ENCODE measurements at regions of chr2 and their contacts with region 1.

Region 1: DNA sequence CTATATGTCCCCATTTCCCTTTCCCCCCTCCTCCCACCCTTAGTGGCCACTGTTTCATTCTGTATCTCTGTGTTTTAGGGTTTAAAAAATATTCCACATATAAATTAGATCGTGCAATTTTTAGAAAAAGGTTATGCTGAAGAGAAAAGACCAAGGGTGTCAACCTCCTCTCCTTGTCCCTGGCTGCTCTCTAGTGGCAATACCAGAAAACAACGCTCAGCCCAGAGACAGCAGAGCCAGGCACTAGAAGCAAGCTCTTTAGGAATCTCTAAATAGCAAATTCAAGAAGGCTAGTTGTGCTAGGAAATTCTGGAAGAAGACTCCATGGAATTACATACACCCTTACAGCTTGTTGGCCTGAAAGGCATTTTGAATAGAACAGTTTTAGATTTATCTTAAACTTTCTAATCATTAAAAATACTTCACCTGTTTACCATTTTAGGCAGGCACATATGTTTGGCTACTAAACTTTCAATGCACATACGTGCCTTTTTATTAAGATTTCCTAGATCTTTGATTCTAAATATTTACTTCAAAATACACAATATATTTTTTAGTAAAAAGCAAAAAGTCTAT is 35.1 kb upstream of the RASGRP3 start:
- DNase-seq: peak; percentile 79
- H3K4me3 ChIP-seq: no peak overlapping the region
- H3K27ac ChIP-seq: no peak overlapping the region
- H3K4me1 ChIP-seq: peaks cover 19% of the 10 kb centered on the region
- H3K27me3 ChIP-seq: no peaks in the 10 kb centered on the region
- CTCF ChIP-seq: peak; percentile 74
- POLR2A ChIP-seq: no peak

Region 2: GRCh38 chr2:32553829-32554432 is 887.4 kb before region 1 on chr2:
- CTCF ChIA-PET with region 1: interaction called, 3 read pairs
- POLR2A ChIA-PET with region 1: no interaction called
- dilution Hi-C with region 1: no loop called
- intact Hi-C with region 1: loop called (anchors 10 kb)
- DNase-seq: peak; percentile 63
- H3K4me3 ChIP-seq: no peak overlapping the region
- H3K27ac ChIP-seq: no peak overlapping the region
- H3K4me1 ChIP-seq: peaks cover 7% of the 10 kb centered on the region
- H3K27me3 ChIP-seq: no peaks in the 10 kb centered on the region
- CTCF ChIP-seq: peak; percentile 50
- POLR2A ChIP-seq: no peak

Region 3: GRCh38 chr2:33033606-33034081 is 407.7 kb before region 1 on chr2:
- CTCF ChIA-PET with region 1: interaction called, 20 read pairs
- POLR2A ChIA-PET with region 1: no interaction called
- dilution Hi-C with region 1: no loop called
- intact Hi-C with region 1: no loop called
- DNase-seq: peak; percentile 67
- H3K4me3 ChIP-seq: no peak overlapping the region
- H3K27ac ChIP-seq: no peak overlapping the region
- H3K4me1 ChIP-seq: peaks cover 15% of the 10 kb centered on the region
- H3K27me3 ChIP-seq: no peaks in the 10 kb centered on the region
- CTCF ChIP-seq: peak; percentile 13 to 46
- POLR2A ChIP-seq: no peak

Region 4: DNA sequence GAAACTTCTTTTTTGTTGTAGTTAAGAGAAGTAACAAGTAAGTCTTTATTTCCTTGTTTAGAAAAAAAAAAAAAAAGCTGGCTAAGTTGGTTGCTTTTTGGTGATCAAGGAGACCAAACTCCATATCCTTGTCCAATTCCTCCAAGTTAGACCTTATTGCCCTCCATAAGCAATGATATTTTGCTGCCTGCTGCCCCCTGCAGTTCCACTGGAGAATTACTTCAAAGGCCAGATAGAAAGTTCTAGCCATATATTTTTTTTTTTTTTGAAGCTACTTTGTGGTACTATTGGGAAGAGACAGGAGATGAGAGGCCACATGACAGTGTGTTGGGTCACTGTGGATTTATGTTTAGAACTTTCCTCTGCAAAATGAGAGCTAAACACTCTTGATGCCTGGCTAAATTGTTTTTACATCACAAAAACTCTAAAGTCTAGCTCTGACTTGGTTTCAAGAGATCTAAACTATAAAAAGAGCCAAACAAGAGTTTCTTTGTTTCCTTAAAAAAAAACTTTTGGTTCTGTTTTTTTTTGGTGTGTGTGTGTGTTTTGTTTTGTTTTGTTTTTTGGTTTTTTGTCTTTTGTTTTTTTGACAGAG is 45.6 kb before region 1 on chr2:
- CTCF ChIA-PET with region 1: interaction called, 15 read pairs
- POLR2A ChIA-PET with region 1: no interaction called
- dilution Hi-C with region 1: no loop called
- intact Hi-C with region 1: no loop called
- DNase-seq: peak; percentile 76
- H3K4me3 ChIP-seq: no peak overlapping the region
- H3K27ac ChIP-seq: no peak overlapping the region
- H3K4me1 ChIP-seq: no peaks in the 10 kb centered on the region
- H3K27me3 ChIP-seq: no peaks in the 10 kb centered on the region
- CTCF ChIP-seq: peak; percentile 56 to 58
- POLR2A ChIP-seq: no peak

Region 5: GRCh38 chr2:33419581-33420200 is 21.6 kb before region 1 on chr2:
- CTCF ChIA-PET with region 1: interaction called, 154 read pairs
- POLR2A ChIA-PET with region 1: interaction called, 4 read pairs
- dilution Hi-C with region 1: no loop called
- intact Hi-C with region 1: loop called (anchors 1 kb)
- DNase-seq: no peak
- H3K4me3 ChIP-seq: no peak overlapping the region
- H3K27ac ChIP-seq: peak overlapping the region; percentile 23
- H3K4me1 ChIP-seq: peaks cover 31% of the 10 kb centered on the region
- H3K27me3 ChIP-seq: no peaks in the 10 kb centered on the region
- CTCF ChIP-seq: no peak
- POLR2A ChIP-seq: no peak

Region 6: GRCh38 chr2:33583194-33583938 is 142.0 kb after region 1 on chr2:
- CTCF ChIA-PET with region 1: interaction called, 56 read pairs
- POLR2A ChIA-PET with region 1: no interaction called
- dilution Hi-C with region 1: no loop called
- intact Hi-C with region 1: loop called (anchors 1 kb)
- DNase-seq: peak; percentile 64
- H3K4me3 ChIP-seq: no peak overlapping the region
- H3K27ac ChIP-seq: no peak overlapping the region
- H3K4me1 ChIP-seq: peaks cover 3% of the 10 kb centered on the region
- H3K27me3 ChIP-seq: no peaks in the 10 kb centered on the region
- CTCF ChIP-seq: peak; percentile 63 to 66
- POLR2A ChIP-seq: no peak

Region 7: DNA sequence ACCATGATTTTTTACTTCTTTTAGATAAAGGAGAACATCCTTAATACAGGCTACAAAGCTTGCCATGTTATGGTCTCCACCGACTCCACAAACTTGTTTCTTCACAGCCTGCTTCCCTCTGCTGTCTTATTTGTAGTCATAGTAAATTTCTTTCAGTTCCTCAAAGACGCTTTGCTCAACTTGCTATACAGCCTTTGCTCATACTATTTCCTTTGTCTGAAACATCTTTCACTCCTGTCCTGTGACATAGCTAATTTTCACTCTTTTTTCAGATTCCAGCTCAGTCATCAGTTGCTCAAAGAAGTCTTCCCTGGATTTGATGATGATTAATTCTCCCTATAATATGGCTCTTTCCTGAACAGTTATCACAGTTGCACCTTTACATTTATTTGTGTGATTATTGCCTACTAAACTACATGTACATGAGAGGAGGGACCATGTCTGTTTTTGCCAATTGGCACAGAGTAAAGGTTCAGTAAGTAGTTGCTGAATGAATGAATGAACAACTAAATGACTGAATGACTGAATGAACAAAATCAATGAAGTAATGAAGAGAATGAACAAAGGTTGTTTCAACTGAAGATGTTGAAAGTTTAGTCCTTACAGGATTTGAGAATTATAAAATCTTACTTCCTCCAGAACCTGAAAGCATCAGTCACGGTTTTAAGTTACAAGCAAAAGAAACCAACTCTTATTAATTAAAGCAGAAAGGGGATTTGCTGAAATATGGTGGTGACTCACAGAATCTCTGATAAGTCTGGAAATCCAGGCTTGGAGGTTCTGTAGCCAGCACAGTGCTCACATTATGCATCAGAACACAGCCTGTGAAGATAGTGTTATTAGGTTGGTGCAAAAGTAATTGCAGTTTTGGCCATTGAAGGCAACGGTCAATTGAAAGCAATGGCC is 344.1 kb after region 1 on chr2:
- CTCF ChIA-PET with region 1: no interaction called
- POLR2A ChIA-PET with region 1: no interaction called
- dilution Hi-C with region 1: no loop called
- intact Hi-C with region 1: no loop called
- DNase-seq: no peak
- H3K4me3 ChIP-seq: no peak overlapping the region
- H3K27ac ChIP-seq: no peak overlapping the region
- H3K4me1 ChIP-seq: no peaks in the 10 kb centered on the region
- H3K27me3 ChIP-seq: no peaks in the 10 kb centered on the region
- CTCF ChIP-seq: no peak
- POLR2A ChIP-seq: no peak

Measured in endothelial cell of umbilical vein (primary cell).